Right ventricle myocardium inferior (tissue), 1 donor: ENCODE measurements at regions of chr7 and their contacts with region 1.

Region 1: DNA sequence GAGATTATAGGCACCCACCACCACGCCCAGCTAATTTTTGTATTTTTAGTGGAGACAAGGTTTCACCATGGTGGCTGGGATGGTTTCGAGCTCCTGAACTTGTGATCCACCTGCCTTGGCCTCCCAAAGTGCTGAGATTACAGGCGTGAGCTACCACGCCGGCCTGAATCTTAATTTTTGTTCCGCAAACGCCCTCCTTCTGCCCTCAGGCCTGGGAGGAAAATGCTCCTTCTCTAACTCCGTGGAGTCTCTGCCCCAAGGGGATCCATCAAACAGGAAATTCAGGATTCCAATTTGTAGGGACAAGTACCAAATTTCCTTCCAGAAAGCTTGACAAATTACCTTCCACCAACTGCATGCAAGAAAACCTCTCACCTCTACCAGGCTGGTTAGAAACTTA is 43.2 kb downstream of the RBAK start:
- DNase-seq: no peak
- ATAC-seq: no peak

Region 2: GRCh38 chr7:4973728-4974198 is 115.1 kb before region 1 on chr7:
- intact Hi-C with region 1: loop called (anchors 5 kb)
- DNase-seq: peak; percentile 96
- ATAC-seq: peak; percentile 98

Region 3: DNA sequence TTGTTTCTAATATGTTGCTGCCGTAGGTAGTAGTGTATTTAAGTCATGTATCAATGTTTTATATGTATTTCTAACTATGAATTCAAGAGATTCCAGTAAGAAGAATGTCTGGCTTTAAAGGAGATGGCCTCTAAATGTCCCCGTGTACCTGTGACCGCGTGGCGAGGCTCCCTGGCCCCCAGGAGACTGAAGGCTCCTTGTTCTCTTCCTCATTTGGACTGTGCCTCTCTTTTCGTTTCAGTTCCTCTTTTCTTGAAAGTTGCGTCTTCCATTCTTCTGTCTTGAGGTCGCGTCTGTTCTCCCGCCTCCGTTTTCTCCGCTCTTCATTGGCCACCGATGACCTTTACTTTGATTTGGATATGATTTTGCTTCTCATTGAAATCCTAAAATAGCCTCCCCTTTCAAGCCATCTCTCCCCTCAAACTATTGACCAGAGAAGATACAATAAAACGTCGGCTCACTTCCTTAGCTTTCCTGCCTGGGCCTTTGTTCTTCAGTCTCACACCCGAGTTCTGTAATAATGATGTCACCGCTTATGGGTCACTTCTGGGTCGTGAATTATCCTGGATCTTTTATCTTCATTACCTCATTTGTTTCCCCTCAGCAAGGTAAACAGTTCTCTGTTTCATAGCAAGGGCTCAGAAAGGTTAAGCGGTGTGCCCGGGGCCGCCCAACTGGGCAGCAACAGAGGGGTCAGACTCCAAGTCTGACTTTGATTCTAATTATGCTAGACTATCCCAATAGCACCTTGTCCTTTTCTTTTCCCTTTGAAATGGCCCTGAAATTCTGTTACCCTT is 129.9 kb after region 1 on chr7:
- intact Hi-C with region 1: no loop called
- DNase-seq: no peak
- ATAC-seq: peak; percentile 29